PC-3 (cell line): ENCODE measurements at regions of chr6 and their contacts with region 1.

Region 1: GRCh38 chr6:79630883-79631692 is at the start of gene SH3BGRL2:
- DNase-seq: peak; percentile 63
- ATAC-seq: peak; percentile 79
- H3K4me3 ChIP-seq: peak within 1 kb of the TSS; percentile 94
- H3K27ac ChIP-seq: no peak within 1 kb of the TSS
- H3K4me1 ChIP-seq: peaks cover 26% of the 10 kb centered on the region
- H3K27me3 ChIP-seq: no peaks in the 10 kb centered on the region
- CTCF ChIP-seq: no peak
- total RNA-seq, gene SH3BGRL2: 3.7 and 3.8 TPM in 2 replicates

Region 2: GRCh38 chr6:79600812-79601609 is 30.1 kb before region 1 on chr6:
- CTCF ChIA-PET with region 1: interaction called, 17 read pairs
- POLR2A ChIA-PET with region 1: no interaction called
- intact Hi-C with region 1: no loop called
- DNase-seq: peak; percentile 83
- ATAC-seq: peak; percentile 97
- H3K4me3 ChIP-seq: no peak overlapping the region
- H3K27ac ChIP-seq: 0 out of 2 replicates have a peak overlapping the region, but pooled peaks have one; percentile 23
- H3K4me1 ChIP-seq: peaks cover 15% of the 10 kb centered on the region
- H3K27me3 ChIP-seq: no peaks in the 10 kb centered on the region
- CTCF ChIP-seq: no peak

Region 3: DNA sequence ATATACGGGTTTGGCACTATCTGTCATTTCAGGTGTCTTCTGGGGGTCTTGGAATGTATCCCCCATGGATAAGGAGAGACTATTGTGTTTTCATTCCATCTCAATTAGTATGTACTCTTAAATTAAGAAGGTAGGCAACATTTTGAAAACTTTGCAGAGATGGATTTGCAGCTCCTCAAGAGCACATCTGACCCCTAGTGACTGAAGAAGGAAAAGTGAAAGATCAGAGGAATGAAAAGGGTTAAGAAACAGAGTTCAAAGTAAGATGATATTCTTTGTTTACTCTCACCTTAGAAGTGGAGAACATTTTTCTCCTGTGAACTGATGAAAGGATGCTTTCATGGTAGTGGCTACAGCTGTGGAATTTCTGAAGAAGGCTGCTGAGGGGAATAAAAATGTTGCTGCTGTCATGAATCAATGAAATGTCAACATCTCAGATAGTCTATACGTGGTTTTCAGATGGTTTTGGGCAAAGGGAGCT is 41.6 kb after region 1 on chr6:
- CTCF ChIA-PET with region 1: interaction called, 4 read pairs
- POLR2A ChIA-PET with region 1: no interaction called
- intact Hi-C with region 1: loop called (anchors 5 kb)
- DNase-seq: peak; percentile 65
- ATAC-seq: peak; percentile 41
- H3K4me3 ChIP-seq: no peak overlapping the region
- H3K27ac ChIP-seq: peak overlapping the region; percentile 70; the same call in 1 of the 2 replicates
- H3K4me1 ChIP-seq: peaks cover 23% of the 10 kb centered on the region
- H3K27me3 ChIP-seq: no peaks in the 10 kb centered on the region
- CTCF ChIP-seq: peak; percentile 81

Region 4: GRCh38 chr6:79971195-79971594 is 340.1 kb after region 1 on chr6:
- CTCF ChIA-PET with region 1: no interaction called
- POLR2A ChIA-PET with region 1: no interaction called
- intact Hi-C with region 1: no loop called
- DNase-seq: no peak
- ATAC-seq: no peak
- H3K4me3 ChIP-seq: no peak overlapping the region
- H3K27ac ChIP-seq: no peak overlapping the region
- H3K4me1 ChIP-seq: no peaks in the 10 kb centered on the region
- H3K27me3 ChIP-seq: no peaks in the 10 kb centered on the region
- CTCF ChIP-seq: no peak